A673 (cell line): ENCODE measurements at regions of chr22 and their contacts with region 1.

Region 1: GRCh38 chr22:41327124-41327523 is 25.8 kb downstream of the ZC3H7B start:
- DNase-seq: no peak
- H3K4me3 ChIP-seq: no peak overlapping the region
- H3K27ac ChIP-seq: no peak overlapping the region
- H3K4me1 ChIP-seq: no peaks in the 10 kb centered on the region
- H3K27me3 ChIP-seq: no peaks in the 10 kb centered on the region
- CTCF ChIP-seq: no peak

Region 2: GRCh38 chr22:41048791-41049717 is 278.1 kb before region 1 on chr22:
- CTCF ChIA-PET with region 1: no interaction called
- POLR2A ChIA-PET with region 1: no interaction called
- intact Hi-C with region 1: no loop called
- DNase-seq: peak; percentile 73
- H3K4me3 ChIP-seq: no peak overlapping the region
- H3K27ac ChIP-seq: no peak overlapping the region
- H3K4me1 ChIP-seq: peaks cover 9% of the 10 kb centered on the region
- H3K27me3 ChIP-seq: no peaks in the 10 kb centered on the region
- CTCF ChIP-seq: no peak

Region 3: GRCh38 chr22:41217553-41218157 is 109.5 kb before region 1 on chr22:
- CTCF ChIA-PET with region 1: no interaction called
- POLR2A ChIA-PET with region 1: no interaction called
- intact Hi-C with region 1: no loop called
- DNase-seq: peak; percentile 95
- H3K4me3 ChIP-seq: peak overlapping the region; percentile 33
- H3K27ac ChIP-seq: peak overlapping the region; percentile 99
- H3K4me1 ChIP-seq: peaks cover 22% of the 10 kb centered on the region
- H3K27me3 ChIP-seq: no peaks in the 10 kb centered on the region
- CTCF ChIP-seq: no peak

Region 4: DNA sequence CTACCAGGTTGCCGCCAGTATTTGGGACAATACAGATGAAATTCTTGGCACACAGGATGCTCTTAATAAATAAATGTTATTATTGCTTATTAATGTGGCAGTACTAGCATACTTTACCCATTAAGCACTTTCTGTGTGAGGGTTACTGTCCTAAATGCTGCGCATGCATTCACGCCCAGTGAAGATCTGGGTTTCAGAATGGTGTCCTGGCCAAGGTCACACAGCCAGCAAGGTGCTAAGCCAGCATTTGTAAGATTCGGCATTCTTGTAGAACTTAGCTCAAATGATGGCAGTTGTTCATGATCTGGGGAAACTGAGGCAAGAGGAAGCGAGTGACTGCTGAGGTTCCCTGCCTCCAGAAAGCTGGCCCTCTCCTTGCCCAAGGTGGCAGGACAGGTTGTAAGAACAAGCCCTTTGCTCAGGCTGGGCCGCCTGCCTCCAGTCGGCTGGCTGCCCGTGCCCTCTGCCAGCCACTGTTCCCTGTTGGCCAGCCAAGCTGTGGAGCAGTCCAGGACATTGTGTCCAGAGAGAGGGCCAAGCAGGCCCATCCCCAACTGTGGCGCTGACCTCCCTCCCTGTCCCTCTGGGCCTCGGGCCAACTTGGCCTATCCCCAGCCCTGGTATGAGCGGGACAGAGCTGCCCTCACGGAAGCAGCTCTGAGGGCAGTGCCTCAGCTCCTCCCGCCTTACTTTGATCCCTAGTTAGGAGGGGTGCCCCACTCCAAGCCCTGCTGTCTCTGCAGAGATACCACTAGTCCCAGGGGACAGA is 90.7 kb after region 1 on chr22:
- CTCF ChIA-PET with region 1: no interaction called
- POLR2A ChIA-PET with region 1: no interaction called
- intact Hi-C with region 1: no loop called
- DNase-seq: no peak
- H3K4me3 ChIP-seq: no peak overlapping the region
- H3K27ac ChIP-seq: no peak overlapping the region
- H3K4me1 ChIP-seq: peaks cover 10% of the 10 kb centered on the region
- H3K27me3 ChIP-seq: no peaks in the 10 kb centered on the region
- CTCF ChIP-seq: no peak

Region 5: GRCh38 chr22:41524809-41525452 is 197.8 kb after region 1 on chr22:
- CTCF ChIA-PET with region 1: no interaction called
- POLR2A ChIA-PET with region 1: interaction called, 13 read pairs
- intact Hi-C with region 1: no loop called
- DNase-seq: peak; percentile 67
- H3K4me3 ChIP-seq: no peak overlapping the region
- H3K27ac ChIP-seq: peak overlapping the region; percentile 55
- H3K4me1 ChIP-seq: no peaks in the 10 kb centered on the region
- H3K27me3 ChIP-seq: no peaks in the 10 kb centered on the region
- CTCF ChIP-seq: no peak; the same call in 1 of the 2 replicates